ENCODE measurements at regions of chr6 and their contacts with region 1.

Region 1: GRCh38 chr6:4066029-4066755 is 12.7 kb downstream of the FAM217A start:
- DNase-seq: no peak
- ATAC-seq: no peak
- H3K4me3 ChIP-seq: no peak overlapping the region
- H3K27ac ChIP-seq: no peak overlapping the region
- H3K4me1 ChIP-seq: no peaks in the 10 kb centered on the region
- H3K27me3 ChIP-seq: no peaks in the 10 kb centered on the region
- CTCF ChIP-seq: no peak
- POLR2A ChIP-seq: no peak

Region 2: GRCh38 chr6:3929281-3929798 is 136.9 kb before region 1 on chr6:
- intact Hi-C with region 1: no loop called
- DNase-seq: peak in 1 of 5 donors; percentile 46
- ATAC-seq: peak in 1 of 4 donors; percentile 36
- H3K4me3 ChIP-seq: no peak overlapping the region
- H3K27ac ChIP-seq: peak overlapping the region in 3 of 12 donors; percentile 15 to 64 (median 26)
- H3K4me1 ChIP-seq: peaks cover 0 to 33% (median 9%) of the 10 kb centered on the region in 12 donors
- H3K27me3 ChIP-seq: no peaks in the 10 kb centered on the region
- CTCF ChIP-seq: no peak
- POLR2A ChIP-seq: no peak

Region 3: DNA sequence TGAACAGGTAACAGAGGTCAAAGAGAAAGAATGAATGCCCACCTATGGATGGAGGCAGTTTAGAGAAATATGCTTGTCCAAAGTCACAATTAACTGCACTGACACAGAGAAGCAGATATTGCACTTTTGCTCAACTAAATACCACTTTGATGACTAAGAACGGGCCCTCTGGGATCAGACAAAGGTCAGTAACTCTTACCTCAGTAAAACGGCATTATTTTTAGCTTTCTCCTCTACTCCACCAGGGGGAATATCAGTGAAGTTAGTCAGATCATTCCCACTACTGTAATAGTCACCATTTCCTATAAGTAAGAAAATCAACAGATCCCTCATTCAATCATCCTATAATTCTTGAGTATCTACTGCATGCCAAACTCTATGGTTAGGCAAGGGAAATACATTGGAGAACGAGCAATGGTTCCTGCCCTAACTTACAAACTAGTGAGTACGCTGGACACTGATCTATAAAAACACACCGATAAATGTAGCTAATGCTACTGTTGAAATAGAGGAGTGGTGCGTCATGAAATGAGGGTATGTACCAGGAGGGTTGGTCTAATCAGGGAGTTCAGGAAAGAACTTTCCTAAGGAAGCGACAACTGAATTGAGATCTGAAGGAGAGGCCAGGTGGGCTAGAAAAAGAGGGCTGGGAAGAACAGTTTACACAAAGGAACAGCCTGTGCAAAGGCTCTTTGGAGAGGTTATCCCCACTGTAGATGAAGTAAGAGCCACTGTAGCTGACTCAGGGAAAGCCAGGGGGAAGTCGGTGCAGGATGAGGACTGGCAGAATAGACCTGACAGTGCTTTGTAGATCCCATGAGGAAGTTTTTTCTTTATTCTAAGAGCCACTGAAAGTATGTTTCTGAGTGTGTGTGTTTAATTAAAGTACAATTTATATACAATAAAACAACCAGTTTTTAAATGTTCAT is 60.0 kb after region 1 on chr6:
- intact Hi-C with region 1: loop called in 1 of 10 experiments (anchors 10 kb)
- DNase-seq: no peak
- ATAC-seq: peak in 3 of 4 donors; percentile 44 to 91 (median 77)
- H3K4me3 ChIP-seq: no peak overlapping the region
- H3K27ac ChIP-seq: peak overlapping the region in 2 of 12 donors; percentile 30 to 34
- H3K4me1 ChIP-seq: peaks cover 0 to 7% (median 0%) of the 10 kb centered on the region in 12 donors
- H3K27me3 ChIP-seq: no peaks in the 10 kb centered on the region
- CTCF ChIP-seq: peak in 3 of 12 donors; percentile 5 to 27 (median 20)
- POLR2A ChIP-seq: no peak